Stomach (tissue), 19 donors: ENCODE measurements at regions of chr1 and their contacts with region 1.

Region 1: GRCh38 chr1:150629115-150629928 is at the start of gene ENSA:
- DNase-seq: peak; percentile 97 to 100
- H3K4me3 ChIP-seq: peak within 1 kb of the TSS; percentile 64 to 76 (median 71)
- H3K27ac ChIP-seq: peak within 1 kb of the TSS; percentile 96 to 99 (median 98)
- H3K4me1 ChIP-seq: peaks cover 11 to 55% (median 36%) of the 10 kb centered on the region in 4 donors
- H3K27me3 ChIP-seq: no peaks in the 10 kb centered on the region
- CTCF ChIP-seq: no peak
- EP300 ChIP-seq: no peak
- POLR2A ChIP-seq: peak in 2 of 4 donors; percentile 83 to 92
- total RNA-seq, gene ENSA: 106 to 349 (median 133) TPM

Region 2: GRCh38 chr1:150552093-150552691 is 77.1 kb before region 1 on chr1:
- intact Hi-C with region 1: loop called (anchors 10 kb)
- DNase-seq: peak; percentile 65 to 91
- H3K4me3 ChIP-seq: peak overlapping the region in 1 of 4 donors; percentile 10
- H3K27ac ChIP-seq: peak overlapping the region; percentile 57 to 93 (median 85)
- H3K4me1 ChIP-seq: peaks cover 38 to 74% (median 60%) of the 10 kb centered on the region in 4 donors
- H3K27me3 ChIP-seq: no peaks in the 10 kb centered on the region
- CTCF ChIP-seq: no peak
- EP300 ChIP-seq: peak; percentile 46
- POLR2A ChIP-seq: no peak

Region 3: GRCh38 chr1:150578965-150579798 is 50.1 kb before region 1 on chr1 and contains the start of gene MCL1:
- intact Hi-C with region 1: no loop called
- DNase-seq: peak; percentile 95 to 98
- H3K4me3 ChIP-seq: peak within 1 kb of the TSS; percentile 74 to 99 (median 88)
- H3K27ac ChIP-seq: peak within 1 kb of the TSS; percentile 94 to 100 (median 100)
- H3K4me1 ChIP-seq: peaks cover 23 to 44% (median 27%) of the 10 kb centered on the region in 4 donors
- H3K27me3 ChIP-seq: no peaks in the 10 kb centered on the region
- CTCF ChIP-seq: peak in 2 of 7 experiments; percentile 17 to 29
- EP300 ChIP-seq: no peak
- POLR2A ChIP-seq: peak in 2 of 4 donors; percentile 83 to 97
- total RNA-seq, gene MCL1: 87.5 to 330 (median 142) TPM

Region 4: DNA sequence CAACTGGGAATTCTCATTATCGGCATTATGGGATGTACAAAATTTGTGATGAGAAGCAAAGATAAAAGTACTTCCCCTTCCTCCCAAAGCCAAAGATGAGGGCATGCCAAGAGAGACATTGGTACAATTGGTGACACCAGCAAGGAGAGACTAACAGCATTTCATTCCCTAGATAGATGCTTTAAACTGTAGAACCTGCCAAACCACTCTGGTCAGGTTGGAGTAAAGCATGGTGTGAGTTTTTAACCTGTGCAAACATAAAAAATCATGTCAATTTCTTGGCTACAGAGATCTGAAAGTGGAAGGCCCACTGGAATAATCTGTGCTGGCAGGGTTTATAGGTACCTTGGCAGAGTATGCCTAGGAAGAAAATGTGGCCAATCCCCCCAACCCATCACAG is 277.0 kb after region 1 on chr1:
- intact Hi-C with region 1: no loop called
- DNase-seq: peak in 1 of 2 donors; percentile 50
- H3K4me3 ChIP-seq: no peak overlapping the region
- H3K27ac ChIP-seq: no peak overlapping the region
- H3K4me1 ChIP-seq: no peaks in the 10 kb centered on the region
- H3K27me3 ChIP-seq: no peaks in the 10 kb centered on the region
- CTCF ChIP-seq: no peak
- EP300 ChIP-seq: no peak
- POLR2A ChIP-seq: no peak